Right ventricle myocardium superior (tissue), 1 donor: ENCODE measurements at regions of chr16 and their contacts with region 1.

Region 1: GRCh38 chr16:23435500-23435899 is 17.5 kb downstream of the COG7 start:
- DNase-seq: peak; percentile 73
- ATAC-seq: peak; percentile 86

Region 2: GRCh38 chr16:22898874-22899348 is 536.6 kb before region 1 on chr16:
- intact Hi-C with region 1: loop called (anchors 10 kb)
- DNase-seq: peak; percentile 77
- ATAC-seq: peak; percentile 85

Region 3: DNA sequence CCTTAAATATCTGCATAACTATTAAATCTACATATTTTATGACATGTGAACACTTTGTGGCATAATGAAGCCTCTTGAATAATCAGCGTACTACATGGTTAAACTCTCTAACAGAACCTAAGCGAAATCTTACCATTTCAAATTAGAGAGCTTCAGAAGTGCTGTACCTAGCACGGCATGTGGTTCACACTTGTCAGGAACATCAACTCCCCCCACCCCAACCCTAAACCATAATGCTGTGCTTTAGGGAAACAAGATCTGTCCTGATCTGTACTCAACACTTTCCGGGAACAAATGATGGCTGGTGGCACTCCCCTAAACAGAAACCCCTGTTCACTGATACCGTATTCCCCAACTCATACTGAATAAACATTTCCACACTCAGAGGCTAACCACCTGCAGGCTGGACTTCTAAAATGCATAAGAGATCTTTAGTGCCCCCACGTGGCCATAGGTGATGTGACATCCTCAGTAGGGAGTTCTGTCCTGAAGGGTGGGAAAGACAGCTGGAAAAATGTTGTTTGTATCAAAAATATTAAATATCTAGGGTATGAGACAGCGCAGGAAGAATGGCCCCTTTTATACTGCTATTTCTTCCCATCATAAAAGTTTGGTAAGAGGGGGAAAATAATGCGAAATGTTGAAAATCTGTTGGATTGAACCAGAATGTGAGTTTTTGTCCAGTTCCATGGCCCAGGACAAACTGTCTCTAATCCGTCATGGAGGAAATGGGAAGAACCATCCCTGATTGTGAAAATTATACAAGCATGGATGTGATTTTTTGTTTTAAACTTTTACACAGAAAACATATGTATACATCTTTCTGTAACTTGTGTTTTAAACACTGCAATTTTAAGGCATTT is 374.8 kb before region 1 on chr16:
- intact Hi-C with region 1: loop called (anchors 10 kb)
- DNase-seq: peak; percentile 58
- ATAC-seq: peak; percentile 85

Region 4: GRCh38 chr16:23182460-23183309 is 252.8 kb before region 1 on chr16 and contains the start of gene SCNN1G:
- intact Hi-C with region 1: loop called (anchors 2 kb)
- DNase-seq: peak; percentile 78
- ATAC-seq: peak; percentile 97
- total RNA-seq, gene SCNN1G: 0.13 TPM